A673 (cell line): ENCODE measurements at regions of chr17 and their contacts with region 1.

Region 1: GRCh38 chr17:27455914-27456680 is at the start of gene KSR1:
- DNase-seq: peak; percentile 86
- H3K4me3 ChIP-seq: peak within 1 kb of the TSS; percentile 91
- H3K27ac ChIP-seq: peak within 1 kb of the TSS; percentile 64
- H3K4me1 ChIP-seq: peaks cover 19% of the 10 kb centered on the region
- H3K27me3 ChIP-seq: no peaks in the 10 kb centered on the region
- CTCF ChIP-seq: peak; percentile 79
- total RNA-seq, gene KSR1: 41.7 and 47.8 TPM in 2 replicates

Region 2: DNA sequence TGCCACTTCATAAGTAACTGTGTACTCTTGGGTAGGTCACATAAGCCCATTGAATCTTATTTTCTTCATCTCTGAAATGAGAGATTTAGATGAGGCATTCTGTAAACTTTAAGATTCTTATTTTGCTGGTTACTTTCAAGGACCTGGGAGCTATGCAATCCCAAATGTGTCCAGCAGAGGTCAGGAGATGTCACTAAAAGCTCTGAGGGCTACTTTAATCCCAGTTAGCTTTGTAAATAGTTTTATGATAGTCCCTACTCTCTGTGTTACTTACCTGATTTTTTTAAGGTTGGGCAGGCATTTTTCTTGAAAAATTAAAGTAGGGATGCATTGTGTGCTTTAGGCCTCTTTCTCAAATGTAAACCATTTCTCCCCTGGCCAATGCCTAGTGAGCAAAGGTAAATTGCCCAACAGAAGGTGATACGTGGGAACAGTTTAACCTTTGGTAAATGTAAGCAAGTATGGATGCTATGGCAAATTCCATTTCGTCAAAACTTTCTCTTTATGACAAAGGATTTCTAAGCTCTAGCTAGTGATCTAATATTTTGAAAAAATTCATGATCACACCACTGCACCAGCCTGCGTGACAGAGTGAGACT is 219.3 kb before region 1 on chr17:
- CTCF ChIA-PET with region 1: no interaction called
- POLR2A ChIA-PET with region 1: no interaction called
- intact Hi-C with region 1: loop called (anchors 5 kb)
- DNase-seq: peak; percentile 71
- H3K4me3 ChIP-seq: no peak overlapping the region
- H3K27ac ChIP-seq: no peak overlapping the region
- H3K4me1 ChIP-seq: peaks cover 2% of the 10 kb centered on the region
- H3K27me3 ChIP-seq: no peaks in the 10 kb centered on the region
- CTCF ChIP-seq: peak; percentile 91

Region 3: DNA sequence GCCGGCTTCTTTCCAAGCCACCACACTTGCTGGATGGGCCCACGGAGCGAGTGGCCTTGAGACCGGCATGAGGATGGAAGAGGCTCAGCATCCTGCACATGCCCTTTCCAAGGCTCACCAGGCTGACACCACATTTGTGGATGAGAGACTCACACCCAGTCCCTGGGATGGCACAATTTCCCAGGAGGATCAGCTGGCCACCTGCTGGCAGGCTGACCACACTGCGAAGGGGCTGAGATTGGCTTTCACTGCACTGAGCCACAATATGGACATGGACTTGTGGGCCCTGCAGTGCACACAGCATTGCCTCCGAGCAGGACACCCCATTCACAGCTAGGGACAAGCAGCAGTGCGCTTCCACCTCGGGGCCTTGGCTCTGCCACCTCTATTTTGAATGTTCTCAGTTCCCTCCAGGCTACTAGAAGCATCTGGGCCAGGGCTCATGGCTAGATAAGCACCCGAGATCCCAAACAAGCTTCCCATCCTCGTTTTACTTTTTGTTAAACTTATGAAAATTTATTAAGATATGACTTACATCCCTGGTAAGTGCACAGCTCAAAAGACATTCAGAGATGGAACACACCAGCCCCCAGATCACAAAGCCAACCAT is 25.1 kb before region 1 on chr17:
- CTCF ChIA-PET with region 1: no interaction called
- POLR2A ChIA-PET with region 1: no interaction called
- intact Hi-C with region 1: no loop called
- DNase-seq: peak; percentile 41
- H3K4me3 ChIP-seq: no peak overlapping the region
- H3K27ac ChIP-seq: no peak overlapping the region
- H3K4me1 ChIP-seq: no peaks in the 10 kb centered on the region
- H3K27me3 ChIP-seq: no peaks in the 10 kb centered on the region
- CTCF ChIP-seq: peak; percentile 55

Region 4: GRCh38 chr17:27526604-27527230 is 70.6 kb after region 1 on chr17:
- CTCF ChIA-PET with region 1: no interaction called
- POLR2A ChIA-PET with region 1: no interaction called
- intact Hi-C with region 1: loop called (anchors 5 kb)
- DNase-seq: peak; percentile 30
- H3K4me3 ChIP-seq: no peak overlapping the region
- H3K27ac ChIP-seq: no peak overlapping the region
- H3K4me1 ChIP-seq: peaks cover 39% of the 10 kb centered on the region
- H3K27me3 ChIP-seq: no peaks in the 10 kb centered on the region
- CTCF ChIP-seq: no peak

Region 5: DNA sequence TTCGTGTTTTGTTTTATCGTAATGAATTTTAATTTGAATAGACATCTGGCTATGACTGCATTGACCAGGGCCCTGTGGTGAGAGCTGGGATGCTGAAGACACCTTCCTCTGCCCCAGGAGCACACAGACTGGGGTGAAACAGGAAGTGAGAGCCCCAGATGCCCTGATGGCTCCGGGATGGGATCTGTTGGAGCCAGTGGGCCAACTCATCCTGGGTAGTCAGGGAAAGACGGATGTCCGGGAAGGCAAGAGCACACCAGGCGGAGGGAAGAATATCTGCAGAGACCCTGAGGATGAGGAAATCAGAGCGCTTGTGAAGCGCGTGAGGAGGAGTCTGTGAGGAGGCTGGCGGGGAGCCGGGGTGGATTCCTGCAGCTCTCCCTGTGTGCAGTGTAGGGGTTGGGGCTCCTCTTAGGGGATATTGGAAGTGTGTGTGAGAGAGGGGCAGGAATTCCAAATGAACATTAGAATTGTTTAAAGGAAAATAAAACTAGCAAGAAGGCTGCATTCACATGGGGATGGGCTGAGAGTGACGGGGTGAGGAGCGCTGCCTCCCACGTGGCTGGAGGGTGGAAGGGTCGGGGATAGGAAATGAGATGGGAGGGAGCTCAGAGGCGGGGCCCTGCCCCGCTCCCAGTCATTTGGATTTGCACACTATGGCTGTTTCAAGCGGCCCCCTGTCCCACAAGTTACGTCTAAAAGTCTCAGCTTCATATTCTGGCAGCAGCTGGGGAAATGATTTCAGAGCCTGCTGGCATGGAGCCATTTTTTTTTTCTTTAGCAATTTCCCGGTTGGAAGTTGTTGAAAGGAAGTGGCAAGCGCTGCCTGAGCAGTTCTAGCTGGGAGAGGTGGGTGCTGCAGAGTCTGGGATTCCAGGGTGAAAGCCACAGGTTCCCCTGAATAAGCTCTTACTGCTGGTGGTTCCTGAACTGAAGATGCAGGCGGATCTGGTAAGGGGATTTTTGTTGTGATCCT is 103.7 kb after region 1 on chr17:
- CTCF ChIA-PET with region 1: interaction called, 3 read pairs
- POLR2A ChIA-PET with region 1: no interaction called
- intact Hi-C with region 1: loop called (anchors 5 kb)
- DNase-seq: peak; percentile 92
- H3K4me3 ChIP-seq: peak overlapping the region; percentile 35
- H3K27ac ChIP-seq: peak overlapping the region; percentile 76
- H3K4me1 ChIP-seq: peaks cover 24% of the 10 kb centered on the region
- H3K27me3 ChIP-seq: no peaks in the 10 kb centered on the region
- CTCF ChIP-seq: 0 out of 2 replicates have a peak, but pooled peaks have one; percentile 21